AG04449 (cell line): ENCODE measurements at regions of chr22 and their contacts with region 1.

Region 1: GRCh38 chr22:30005213-30005857 is 74.9 kb upstream of the HORMAD2 start:
- DNase-seq: no peak
- H3K4me3 ChIP-seq: no peak overlapping the region
- CTCF ChIP-seq: peak; percentile 94

Region 2: DNA sequence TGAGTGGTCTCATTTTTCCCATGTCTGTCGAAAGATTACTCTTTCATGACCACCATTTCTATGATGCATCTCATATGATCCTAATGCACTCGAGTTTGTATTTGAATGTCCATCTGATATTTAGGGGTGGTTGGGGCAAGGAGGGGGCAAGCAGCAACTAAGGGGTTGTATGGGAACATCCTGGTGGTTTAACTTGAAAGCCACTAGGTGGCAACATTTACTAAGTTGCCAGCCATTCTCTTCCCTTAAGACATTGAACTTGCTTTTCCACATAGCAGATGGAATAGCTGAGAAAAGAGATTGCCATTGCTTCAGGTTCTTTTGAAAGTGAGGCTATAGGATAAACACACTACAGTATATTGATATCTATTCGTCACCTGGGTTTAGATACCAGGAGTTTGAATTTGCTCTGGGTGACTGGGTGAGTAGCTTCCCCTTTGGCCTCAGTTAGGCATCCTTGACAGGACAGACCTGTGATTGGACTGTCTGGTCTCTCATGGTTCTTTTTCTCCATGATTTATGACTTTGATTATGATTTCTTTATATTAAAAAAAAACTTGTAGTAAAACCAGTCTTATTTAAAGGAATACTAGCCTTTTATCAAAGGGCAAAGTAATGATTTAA is 369.5 kb before region 1 on chr22:
- CTCF ChIA-PET with region 1: interaction called, 23 read pairs
- POLR2A ChIA-PET with region 1: no interaction called
- DNase-seq: no peak
- H3K4me3 ChIP-seq: no peak overlapping the region
- CTCF ChIP-seq: peak; percentile 66

Region 3: GRCh38 chr22:29766632-29767170 is 238.6 kb before region 1 on chr22 and contains the start of gene ZMAT5:
- CTCF ChIA-PET with region 1: interaction called, 58 read pairs
- POLR2A ChIA-PET with region 1: no interaction called
- DNase-seq: peak; percentile 74
- H3K4me3 ChIP-seq: peak within 1 kb of the TSS; percentile 98
- CTCF ChIP-seq: no peak

Region 4: DNA sequence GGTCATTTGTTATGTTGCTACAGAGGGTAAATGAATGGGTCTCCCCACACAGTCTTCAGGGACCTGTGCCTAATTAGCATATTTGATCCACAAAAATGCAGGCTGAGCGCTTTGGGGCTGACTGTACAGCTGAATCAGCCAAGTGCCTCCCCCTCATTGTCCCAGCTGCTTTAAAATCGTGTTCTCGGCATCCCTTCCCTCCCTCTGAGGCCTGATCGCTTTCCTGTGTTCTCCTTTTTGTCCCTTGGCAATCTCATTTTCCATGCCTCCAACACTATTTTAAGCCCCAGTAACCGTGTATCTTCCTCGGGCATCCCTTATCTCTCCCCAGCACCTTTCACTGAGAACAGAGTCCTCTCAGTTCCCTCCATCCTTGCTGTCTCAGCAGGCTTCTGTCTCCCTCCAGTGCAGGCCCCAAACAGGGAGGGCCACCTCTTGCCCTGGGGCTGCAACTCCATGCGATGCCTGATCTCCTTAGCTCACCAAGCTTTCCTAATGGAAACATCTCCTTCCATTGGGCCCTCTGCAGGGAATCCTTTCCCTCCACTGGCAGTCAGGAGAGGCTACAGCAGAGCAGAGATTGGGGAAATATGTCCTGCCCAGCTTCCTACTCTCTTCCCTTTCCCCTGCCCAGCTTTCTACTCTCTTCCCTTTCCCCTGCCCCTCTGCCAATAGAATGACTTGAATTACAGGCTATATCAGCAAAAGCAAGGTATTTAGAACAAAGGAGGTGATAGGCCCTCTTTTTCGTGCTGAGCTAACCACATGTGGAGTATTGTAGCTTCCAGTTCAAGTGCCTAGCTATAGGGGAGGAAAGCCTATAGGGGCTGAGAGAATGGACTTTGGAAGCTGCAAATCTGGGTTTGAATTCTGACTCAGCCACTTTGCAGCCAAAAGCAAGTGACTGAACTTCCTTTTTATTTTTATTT is 224.3 kb before region 1 on chr22:
- CTCF ChIA-PET with region 1: interaction called, 17 read pairs
- POLR2A ChIA-PET with region 1: no interaction called
- DNase-seq: no peak
- H3K4me3 ChIP-seq: no peak overlapping the region
- CTCF ChIP-seq: no peak

Region 5: DNA sequence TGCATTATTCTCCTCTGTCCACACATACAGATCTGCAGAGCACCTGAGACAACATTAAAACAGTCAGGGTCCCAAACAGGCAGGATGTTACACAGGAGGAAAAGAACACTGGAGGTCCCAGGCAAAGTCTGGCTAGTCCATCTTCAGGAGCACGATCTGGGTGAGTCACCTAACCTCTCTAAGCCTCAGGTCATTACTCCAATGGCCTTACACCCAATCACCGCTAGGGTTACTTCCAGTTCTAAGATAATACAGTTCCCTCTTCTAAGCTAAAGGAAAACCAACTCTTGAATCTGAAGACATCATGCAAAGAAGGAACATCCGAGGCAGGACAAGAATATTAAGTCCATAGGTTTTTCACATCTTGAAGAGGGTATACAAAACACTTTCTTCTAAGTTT is 191.8 kb before region 1 on chr22:
- CTCF ChIA-PET with region 1: interaction called, 15 read pairs
- POLR2A ChIA-PET with region 1: no interaction called
- DNase-seq: no peak
- H3K4me3 ChIP-seq: no peak overlapping the region
- CTCF ChIP-seq: no peak

Region 6: DNA sequence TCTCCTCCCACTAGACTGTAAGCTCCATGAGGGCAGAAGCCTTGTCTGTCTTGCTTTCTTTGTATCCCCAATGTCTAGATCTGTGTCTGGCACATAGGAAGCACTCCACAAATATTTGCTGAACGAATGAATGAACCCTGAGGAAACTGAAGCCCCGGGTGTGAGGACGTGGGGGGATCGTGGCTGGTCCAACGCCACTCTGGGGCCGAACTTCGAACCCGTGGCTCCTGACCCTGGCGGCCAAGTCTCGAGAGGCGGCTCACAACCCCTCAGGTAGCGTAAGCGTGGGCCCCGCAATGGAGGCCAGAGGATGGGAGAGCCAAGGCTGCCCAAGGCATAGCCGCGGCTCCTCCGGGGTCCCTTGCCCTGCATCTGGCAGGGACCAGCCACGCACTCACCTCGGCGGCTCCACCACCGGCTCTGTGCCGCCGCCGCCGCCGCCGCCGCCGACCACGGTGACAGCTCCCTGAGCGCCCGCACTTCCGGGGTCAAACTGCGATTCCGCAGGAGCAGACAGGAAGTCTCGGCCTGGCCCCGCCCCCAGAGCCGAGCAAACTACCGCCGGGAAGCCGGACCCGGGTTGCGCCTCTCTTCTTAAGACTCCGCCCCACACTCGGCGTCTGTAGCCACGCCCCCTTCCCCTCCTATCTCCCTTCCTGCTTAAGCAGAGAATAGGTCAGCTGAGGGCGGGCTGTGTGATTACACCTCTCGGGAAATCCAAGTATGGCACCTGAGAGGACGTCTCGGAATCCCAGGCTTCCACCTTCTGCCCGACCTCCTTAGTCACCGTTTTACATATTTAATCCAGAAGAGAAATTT is 167.3 kb before region 1 on chr22 and contains the start of gene ASCC2:
- CTCF ChIA-PET with region 1: interaction called, 13 read pairs
- POLR2A ChIA-PET with region 1: no interaction called
- DNase-seq: peak; percentile 56
- H3K4me3 ChIP-seq: peak within 1 kb of the TSS; percentile 97
- CTCF ChIP-seq: no peak

Region 7: GRCh38 chr22:29994027-29994715 is 11.2 kb before region 1 on chr22:
- CTCF ChIA-PET with region 1: interaction called, 76 read pairs
- POLR2A ChIA-PET with region 1: no interaction called
- DNase-seq: peak; percentile 34
- H3K4me3 ChIP-seq: no peak overlapping the region
- CTCF ChIP-seq: no peak